Dorsolateral prefrontal cortex (tissue), 120 donors: ENCODE measurements at regions of chr14 and their contacts with region 1.

Region 1: GRCh38 chr14:51283402-51284085 is 43.5 kb downstream of the TMX1 start:
- DNase-seq: no peak
- H3K4me3 ChIP-seq: no peak overlapping the region
- H3K27ac ChIP-seq: no peak overlapping the region
- H3K27me3 ChIP-seq: no peaks in the 10 kb centered on the region
- CTCF ChIP-seq: peak; percentile 66 to 96 (median 85)

Region 2: DNA sequence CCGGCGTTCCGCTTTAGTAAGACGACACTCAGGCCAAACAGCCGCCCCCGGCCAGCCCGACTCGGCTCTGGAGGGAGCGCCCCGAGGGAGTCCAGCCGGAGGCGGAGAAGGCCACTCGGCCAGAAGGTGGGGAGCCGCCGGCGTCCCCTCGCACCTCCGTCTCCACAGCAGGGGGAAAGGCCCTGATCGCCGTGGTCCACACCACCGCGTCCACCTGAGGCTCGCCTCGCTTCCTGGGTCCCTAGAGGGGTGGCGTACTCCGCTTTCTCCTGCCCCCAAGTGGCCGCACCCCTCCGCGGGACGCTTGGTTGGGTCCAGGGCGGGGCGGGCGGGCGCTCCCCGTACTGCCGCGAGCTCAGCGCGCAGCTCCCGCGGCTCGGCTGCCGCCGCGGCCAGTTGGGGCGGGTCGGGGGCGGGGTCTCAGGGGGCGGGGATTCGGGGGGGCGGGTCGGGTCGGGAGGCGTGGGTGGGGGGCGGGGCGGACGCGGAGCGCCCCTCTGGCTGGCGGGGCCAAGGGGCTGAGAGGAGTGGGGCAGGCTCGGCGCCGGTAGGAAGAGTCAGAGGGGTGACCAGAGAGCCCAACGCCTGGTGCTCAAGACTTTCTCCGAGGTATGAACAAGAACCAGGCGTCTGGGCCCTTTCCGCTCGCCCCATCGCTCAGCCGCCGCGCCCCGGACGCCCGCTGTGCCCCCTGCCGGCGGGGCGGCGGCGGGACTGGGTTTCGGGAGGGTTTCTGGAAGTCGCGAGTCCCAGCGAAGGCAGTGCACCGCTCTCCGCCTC is 368.0 kb after region 1 on chr14 and contains the start of gene FRMD6:
- intact Hi-C with region 1: loop called in 1 of 2 experiments (anchors 10 kb)
- DNase-seq: peak; percentile 57 to 84 (median 70)
- H3K4me3 ChIP-seq: peak within 1 kb of the TSS; percentile 70 to 98 (median 90)
- H3K27ac ChIP-seq: peak within 1 kb of the TSS; percentile 75 to 99 (median 96)
- H3K27me3 ChIP-seq: no peaks in the 10 kb centered on the region
- CTCF ChIP-seq: peak in 54 of 56 donors; percentile 24 to 75 (median 57)
- total RNA-seq, gene FRMD6: 9.1 to 40.7 (median 19.1) TPM

Region 3: GRCh38 chr14:51979088-51979709 is 695.7 kb after region 1 on chr14:
- intact Hi-C with region 1: loop called (anchors 10 kb)
- DNase-seq: peak; percentile 77 to 90 (median 84)
- H3K4me3 ChIP-seq: peak overlapping the region in 14 of 59 donors; percentile 3 to 43 (median 20)
- H3K27ac ChIP-seq: no peak overlapping the region
- H3K27me3 ChIP-seq: no peaks in the 10 kb centered on the region
- CTCF ChIP-seq: peak; percentile 79 to 98 (median 95)

Region 4: GRCh38 chr14:51989293-51990234 is 706.0 kb after region 1 on chr14 and contains the start of gene RTRAF:
- intact Hi-C with region 1: loop called in 1 of 2 experiments (anchors 10 kb)
- DNase-seq: peak; percentile 88 to 98 (median 95)
- H3K4me3 ChIP-seq: peak within 1 kb of the TSS; percentile 68 to 100 (median 95)
- H3K27ac ChIP-seq: peak within 1 kb of the TSS; percentile 44 to 93 (median 81)
- H3K27me3 ChIP-seq: no peaks in the 10 kb centered on the region
- CTCF ChIP-seq: peak in 42 of 56 donors; percentile 8 to 64 (median 38)
- total RNA-seq, gene RTRAF: 37.8 to 99.0 (median 69.0) TPM